Activated CD8-positive, alpha-beta T cell treated with anti-CD3 and anti-CD28 coated beads for 36 hours (primary cell): ENCODE measurements at regions of chr20 and their contacts with region 1.

Region 1: GRCh38 chr20:45436732-45437391 is 20.9 kb downstream of the PIGT start:
- DNase-seq: peak; percentile 92
- ATAC-seq: peak; percentile 99
- H3K4me3 Mint-ChIP-seq: peak overlapping the region; percentile 73
- H3K27ac Mint-ChIP-seq: no peak overlapping the region
- H3K4me1 Mint-ChIP-seq: peaks cover 17% of the 10 kb centered on the region
- H3K27me3 Mint-ChIP-seq: no peaks in the 10 kb centered on the region
- CTCF ChIP-seq: peak; percentile 97

Region 2: GRCh38 chr20:45279992-45280391 is 156.9 kb before region 1 on chr20:
- CTCF ChIA-PET with region 1: no interaction called
- POLR2A ChIA-PET with region 1: no interaction called
- intact Hi-C with region 1: no loop called
- DNase-seq: no peak
- ATAC-seq: no peak
- H3K4me3 Mint-ChIP-seq: no peak overlapping the region
- H3K27ac Mint-ChIP-seq: no peak overlapping the region
- H3K4me1 Mint-ChIP-seq: no peaks in the 10 kb centered on the region
- H3K27me3 Mint-ChIP-seq: peaks cover 27% of the 10 kb centered on the region
- CTCF ChIP-seq: no peak

Region 3: GRCh38 chr20:45300961-45301360 is 135.9 kb before region 1 on chr20:
- CTCF ChIA-PET with region 1: interaction called, 10 read pairs
- POLR2A ChIA-PET with region 1: interaction called, 3 read pairs
- intact Hi-C with region 1: no loop called
- DNase-seq: peak; percentile 78
- ATAC-seq: peak; percentile 81
- H3K4me3 Mint-ChIP-seq: no peak overlapping the region
- H3K27ac Mint-ChIP-seq: no peak overlapping the region
- H3K4me1 Mint-ChIP-seq: peaks cover 24% of the 10 kb centered on the region
- H3K27me3 Mint-ChIP-seq: peaks cover 33% of the 10 kb centered on the region
- CTCF ChIP-seq: peak; percentile 47

Region 4: DNA sequence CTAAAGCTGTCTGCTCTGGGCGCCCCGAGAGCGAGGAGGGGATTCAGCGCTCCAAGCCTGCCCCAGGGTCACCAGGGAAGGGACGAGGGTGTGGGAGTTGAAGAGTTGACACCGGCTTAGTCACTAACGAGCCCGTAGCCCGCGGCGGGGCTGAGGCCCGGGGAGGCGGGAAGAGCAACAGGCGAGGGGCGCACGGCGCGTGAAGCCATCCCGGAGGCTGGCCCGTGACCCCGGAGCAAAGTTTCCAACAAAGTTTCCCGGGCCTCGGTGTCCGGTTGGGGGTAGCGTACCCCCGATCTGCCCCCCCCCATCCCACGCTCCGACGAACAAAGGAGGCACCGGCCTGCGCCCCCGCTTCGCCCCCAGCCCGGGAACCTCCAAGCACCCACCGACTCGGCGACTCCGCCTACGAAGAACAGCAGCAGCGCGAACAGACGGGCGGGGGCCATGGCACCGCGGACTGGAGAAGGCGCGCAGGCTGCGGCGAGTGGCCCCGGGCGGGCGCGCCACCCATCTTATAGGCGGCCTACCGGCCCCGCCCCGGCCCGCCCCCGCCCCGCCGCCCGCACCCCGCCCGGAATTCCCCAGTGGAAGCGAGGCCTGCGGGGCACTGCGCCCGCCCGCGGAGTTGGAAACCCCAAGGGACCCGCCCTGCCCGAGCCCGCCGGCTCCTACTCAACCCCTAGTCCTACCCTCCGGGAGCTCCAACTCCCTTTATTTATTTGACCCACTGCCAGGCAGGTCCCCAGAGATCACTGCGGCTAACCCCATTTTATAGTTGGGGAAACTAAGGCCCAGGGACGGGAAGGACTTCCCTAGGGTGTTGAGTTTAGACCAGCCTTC is 88.7 kb before region 1 on chr20 and contains the start of gene SDC4:
- CTCF ChIA-PET with region 1: interaction called, 12 read pairs
- POLR2A ChIA-PET with region 1: interaction called, 4 read pairs
- intact Hi-C with region 1: no loop called
- DNase-seq: peak; percentile 68
- ATAC-seq: peak; percentile 80
- H3K4me3 Mint-ChIP-seq: peak within 1 kb of the TSS; percentile 79
- H3K27ac Mint-ChIP-seq: peak within 1 kb of the TSS; percentile 81
- H3K4me1 Mint-ChIP-seq: peaks cover 40% of the 10 kb centered on the region
- H3K27me3 Mint-ChIP-seq: peaks cover 2% of the 10 kb centered on the region
- CTCF ChIP-seq: no peak
- total RNA-seq, gene SDC4: 21.1 to 22.0 TPM

Region 5: GRCh38 chr20:45373353-45374100 is 63.3 kb before region 1 on chr20:
- CTCF ChIA-PET with region 1: interaction called, 549 read pairs
- POLR2A ChIA-PET with region 1: interaction called, 12 read pairs
- intact Hi-C with region 1: loop called (anchors 1 kb)
- DNase-seq: peak; percentile 93
- ATAC-seq: peak; percentile 93
- H3K4me3 Mint-ChIP-seq: peak overlapping the region; percentile 77
- H3K27ac Mint-ChIP-seq: peak overlapping the region; percentile 83
- H3K4me1 Mint-ChIP-seq: peaks cover 29% of the 10 kb centered on the region
- H3K27me3 Mint-ChIP-seq: no peaks in the 10 kb centered on the region
- CTCF ChIP-seq: peak; percentile 96

Region 6: DNA sequence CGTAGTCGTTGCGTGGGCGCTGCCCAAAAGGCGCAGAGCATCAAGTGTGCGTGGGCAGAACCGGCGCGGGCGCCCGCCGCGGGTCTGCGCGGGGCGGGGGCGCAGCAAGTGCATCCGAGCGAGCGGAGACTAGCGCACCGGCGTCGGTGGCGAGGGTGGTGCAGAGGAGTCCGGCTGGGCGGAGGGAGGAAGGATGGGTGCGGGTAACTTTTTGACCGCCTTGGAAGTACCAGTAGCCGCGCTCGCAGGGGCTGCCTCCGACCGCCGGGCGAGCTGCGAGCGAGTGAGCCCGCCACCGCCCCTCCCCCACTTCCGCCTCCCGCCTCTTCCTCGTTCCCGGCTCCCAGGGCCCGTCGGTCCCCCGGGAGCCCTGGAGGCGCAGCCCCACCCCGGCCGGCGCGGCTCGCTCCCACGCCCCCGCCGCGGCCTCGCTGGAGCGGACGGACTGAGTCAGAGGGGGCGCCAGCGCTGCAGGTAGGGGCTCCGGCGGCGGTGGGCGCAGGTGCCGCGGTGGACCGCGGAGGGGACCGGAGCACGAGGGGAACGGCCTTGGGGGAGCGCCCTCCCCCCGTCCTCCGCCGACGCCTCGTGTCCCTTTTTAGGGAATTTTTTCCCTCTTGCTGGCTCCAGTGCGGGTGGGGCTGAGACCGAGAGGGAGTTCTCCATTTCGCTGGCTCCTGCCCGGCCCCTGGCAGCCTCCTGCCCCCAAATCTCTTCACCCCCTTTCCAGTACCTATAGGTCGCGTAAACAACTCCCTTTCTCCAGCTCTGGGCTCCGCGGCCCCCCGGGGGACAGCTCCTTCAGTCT is 30.4 kb before region 1 on chr20:
- CTCF ChIA-PET with region 1: interaction called, 26 read pairs
- POLR2A ChIA-PET with region 1: interaction called, 3 read pairs
- intact Hi-C with region 1: no loop called
- DNase-seq: peak; percentile 53
- ATAC-seq: peak; percentile 52
- H3K4me3 Mint-ChIP-seq: peak overlapping the region; percentile 73
- H3K27ac Mint-ChIP-seq: peak overlapping the region; percentile 63
- H3K4me1 Mint-ChIP-seq: peaks cover 21% of the 10 kb centered on the region
- H3K27me3 Mint-ChIP-seq: peaks cover 4% of the 10 kb centered on the region
- CTCF ChIP-seq: no peak

Region 7: DNA sequence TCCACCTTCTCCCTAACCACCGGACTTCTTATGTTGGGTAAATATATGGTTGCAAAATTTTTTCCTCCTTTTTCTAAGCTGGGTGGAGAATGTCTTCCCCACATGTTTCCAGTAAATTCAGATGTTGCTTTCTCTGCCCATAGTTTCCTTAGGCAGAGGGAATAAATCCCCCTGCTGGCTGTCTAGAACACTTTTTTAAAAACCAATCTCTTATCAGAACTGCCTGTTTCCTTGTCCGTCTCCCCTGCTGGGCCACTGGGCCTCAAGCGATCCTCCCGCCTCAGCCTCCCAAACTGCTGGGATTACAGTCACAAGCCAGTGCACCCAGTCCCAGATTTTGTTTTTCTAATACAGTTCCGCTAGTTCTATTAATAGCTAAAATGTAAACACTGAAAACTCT is 22.7 kb after region 1 on chr20:
- CTCF ChIA-PET with region 1: interaction called, 93 read pairs
- POLR2A ChIA-PET with region 1: interaction called, 3 read pairs
- intact Hi-C with region 1: no loop called
- DNase-seq: no peak
- ATAC-seq: no peak
- H3K4me3 Mint-ChIP-seq: no peak overlapping the region
- H3K27ac Mint-ChIP-seq: no peak overlapping the region
- H3K4me1 Mint-ChIP-seq: peaks cover 4% of the 10 kb centered on the region
- H3K27me3 Mint-ChIP-seq: no peaks in the 10 kb centered on the region
- CTCF ChIP-seq: no peak